Right cardiac atrium (tissue), 5 donors: ENCODE measurements at regions of chr5 and their contacts with region 1.

Region 1: DNA sequence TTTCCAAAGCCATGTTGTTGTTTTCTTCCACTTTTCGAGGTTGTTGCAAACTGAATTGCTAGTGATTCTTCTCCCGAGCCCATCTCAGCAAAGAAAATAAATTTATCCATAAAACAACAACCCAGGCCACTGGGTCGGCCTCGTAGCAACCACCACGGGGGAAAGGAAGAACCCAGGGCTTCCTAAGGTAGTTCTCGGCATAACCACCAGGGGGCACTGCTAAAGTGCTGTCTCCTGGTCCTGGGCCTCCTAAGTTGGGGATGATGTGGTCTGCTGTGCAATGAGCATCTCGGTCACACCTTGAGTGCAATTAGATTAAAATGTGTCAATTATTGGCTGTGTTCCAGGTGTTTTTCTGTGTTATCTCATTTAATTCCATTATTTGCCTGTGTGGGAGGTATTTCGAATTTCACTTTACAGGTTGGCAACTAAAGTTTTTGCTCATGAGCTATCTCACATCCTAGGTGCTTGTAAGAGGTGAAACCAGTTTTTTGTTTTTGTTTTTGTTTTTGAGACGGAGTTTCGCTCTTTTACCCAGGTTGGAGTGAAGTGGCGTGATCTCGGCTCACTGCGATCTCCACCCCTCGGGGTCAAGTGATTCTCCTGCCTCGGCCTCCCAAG is 102.8 kb upstream of the DAP start:
- DNase-seq: peak in 1 of 3 donors; percentile 63
- ATAC-seq: peak in 1 of 2 donors; percentile 85
- H3K4me3 ChIP-seq: no peak overlapping the region
- H3K27ac ChIP-seq: no peak overlapping the region
- H3K4me1 ChIP-seq: no peaks in the 10 kb centered on the region
- H3K27me3 ChIP-seq: no peaks in the 10 kb centered on the region

Region 2: GRCh38 chr5:10595678-10596309 is 268.1 kb before region 1 on chr5:
- intact Hi-C with region 1: no loop called
- DNase-seq: peak in 2 of 3 donors; percentile 40 to 58
- ATAC-seq: peak; percentile 93 to 94
- H3K4me3 ChIP-seq: peak overlapping the region; percentile 20
- H3K27ac ChIP-seq: peak overlapping the region; percentile 80
- H3K4me1 ChIP-seq: peaks cover 9% of the 10 kb centered on the region
- H3K27me3 ChIP-seq: no peaks in the 10 kb centered on the region

Region 3: GRCh38 chr5:11046160-11046559 is 182.3 kb after region 1 on chr5:
- intact Hi-C with region 1: loop called in 1 of 4 experiments (anchors 10 kb)
- DNase-seq: peak; percentile 18 to 55 (median 52)
- ATAC-seq: peak; percentile 63 to 71
- H3K4me3 ChIP-seq: no peak overlapping the region
- H3K27ac ChIP-seq: no peak overlapping the region
- H3K4me1 ChIP-seq: no peaks in the 10 kb centered on the region
- H3K27me3 ChIP-seq: no peaks in the 10 kb centered on the region